ENCODE measurements at regions of chr3 and their contacts with region 1.

Region 1: DNA sequence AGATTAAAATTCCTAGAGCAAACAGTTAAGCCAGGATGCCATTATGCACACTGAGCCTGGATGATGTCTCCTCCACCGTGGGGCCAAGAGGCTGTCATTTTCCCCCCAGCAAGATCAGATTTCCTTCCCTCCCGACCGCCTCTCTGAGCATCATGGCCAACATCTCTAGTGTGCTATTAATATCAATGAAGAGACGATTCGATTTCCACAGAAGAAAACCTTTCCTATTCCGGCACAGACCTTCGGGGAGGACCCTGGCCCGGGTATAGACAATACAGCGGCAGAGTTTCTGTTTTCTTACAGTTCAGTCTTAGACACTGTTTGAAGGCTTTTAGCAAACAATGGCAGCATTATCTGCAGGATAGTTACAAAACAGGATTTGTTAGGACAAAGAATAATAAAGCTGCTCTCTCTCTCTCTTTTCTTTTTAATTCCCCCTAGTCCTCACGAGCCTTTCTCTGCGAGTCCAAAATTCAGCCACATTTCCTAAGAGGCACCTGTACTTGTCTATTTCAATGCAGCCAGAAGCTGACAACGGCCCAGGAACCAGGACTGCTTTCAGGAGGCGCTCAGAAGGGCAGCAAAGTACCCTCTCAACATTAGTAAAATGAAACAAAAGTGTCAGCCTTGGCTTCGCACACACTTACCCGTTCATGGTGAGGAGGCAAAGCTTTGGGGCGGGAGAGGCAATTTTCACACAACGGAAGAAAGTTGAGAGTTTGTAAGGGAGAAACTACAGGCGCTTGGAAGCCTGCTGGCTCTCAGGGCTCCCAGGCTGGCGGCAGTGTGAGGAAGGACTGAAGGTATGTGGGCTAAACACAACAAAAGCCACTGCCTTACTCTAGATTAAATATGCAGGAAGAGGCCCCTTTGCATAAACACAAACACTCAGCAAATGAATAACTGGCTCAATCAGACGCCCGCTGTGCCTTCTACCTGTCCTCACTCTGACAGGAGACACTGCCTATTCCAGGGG is 278.0 kb downstream of the FOXP1 start:
- DNase-seq: peak; percentile 36 to 41
- H3K4me3 ChIP-seq: peak overlapping the region; percentile 47
- H3K4me3 Mint-ChIP-seq: peak overlapping the region; percentile 93
- H3K27ac Mint-ChIP-seq: peak overlapping the region; percentile 91
- H3K4me1 ChIP-seq: peaks cover 26% of the 10 kb centered on the region
- H3K4me1 Mint-ChIP-seq: peaks cover 36% of the 10 kb centered on the region
- H3K27me3 ChIP-seq: no peaks in the 10 kb centered on the region
- H3K27me3 Mint-ChIP-seq: no peaks in the 10 kb centered on the region
- CTCF ChIP-seq: no peak

Region 2: GRCh38 chr3:70531063-70531657 is 774.4 kb before region 1 on chr3:
- CTCF ChIA-PET with region 1: no interaction called
- POLR2A ChIA-PET with region 1: no interaction called
- intact Hi-C with region 1: loop called (anchors 10 kb)
- DNase-seq: peak in 1 of 2 experiments; percentile 4
- H3K4me3 ChIP-seq: no peak overlapping the region
- H3K4me3 Mint-ChIP-seq: no peak overlapping the region
- H3K27ac Mint-ChIP-seq: no peak overlapping the region
- H3K4me1 ChIP-seq: no peaks in the 10 kb centered on the region
- H3K4me1 Mint-ChIP-seq: no peaks in the 10 kb centered on the region
- H3K27me3 ChIP-seq: no peaks in the 10 kb centered on the region
- H3K27me3 Mint-ChIP-seq: peaks cover 17% of the 10 kb centered on the region
- CTCF ChIP-seq: peak; percentile 38 to 46

Region 3: GRCh38 chr3:71006810-71007785 is 298.4 kb before region 1 on chr3:
- CTCF ChIA-PET with region 1: no interaction called
- POLR2A ChIA-PET with region 1: no interaction called
- intact Hi-C with region 1: loop called (anchors 1 kb)
- DNase-seq: peak in 1 of 2 experiments; percentile 13
- H3K4me3 ChIP-seq: no peak overlapping the region
- H3K4me3 Mint-ChIP-seq: no peak overlapping the region
- H3K27ac Mint-ChIP-seq: no peak overlapping the region
- H3K4me1 ChIP-seq: peaks cover 15% of the 10 kb centered on the region
- H3K4me1 Mint-ChIP-seq: peaks cover 6% of the 10 kb centered on the region
- H3K27me3 ChIP-seq: no peaks in the 10 kb centered on the region
- H3K27me3 Mint-ChIP-seq: no peaks in the 10 kb centered on the region
- CTCF ChIP-seq: peak in 1 of 2 experiments; percentile 40

Region 4: DNA sequence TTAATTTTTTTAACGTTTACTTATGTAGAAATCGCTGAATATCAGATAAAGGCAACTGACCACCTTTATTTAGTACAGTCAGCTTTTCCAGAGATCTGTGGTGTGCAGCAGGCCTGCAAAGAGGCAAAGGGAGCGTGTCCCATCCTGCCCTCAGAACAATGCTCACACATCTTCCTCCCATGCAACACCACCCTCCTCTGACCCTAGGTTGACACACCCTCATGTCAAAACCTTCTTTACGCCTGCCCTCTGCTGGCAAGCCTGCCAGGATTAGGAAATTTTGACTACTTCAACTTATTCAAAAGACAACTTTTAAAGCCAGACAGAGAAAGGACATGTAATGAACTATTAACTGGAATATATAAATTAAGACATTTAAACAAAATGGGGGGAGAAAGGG is 235.7 kb before region 1 on chr3:
- CTCF ChIA-PET with region 1: no interaction called
- POLR2A ChIA-PET with region 1: no interaction called
- intact Hi-C with region 1: loop called (anchors 5 kb)
- DNase-seq: peak; percentile 50 to 55
- H3K4me3 ChIP-seq: no peak overlapping the region
- H3K4me3 Mint-ChIP-seq: no peak overlapping the region
- H3K27ac Mint-ChIP-seq: peak overlapping the region; percentile 74
- H3K4me1 ChIP-seq: peaks cover 59% of the 10 kb centered on the region
- H3K4me1 Mint-ChIP-seq: peaks cover 46% of the 10 kb centered on the region
- H3K27me3 ChIP-seq: no peaks in the 10 kb centered on the region
- H3K27me3 Mint-ChIP-seq: no peaks in the 10 kb centered on the region
- CTCF ChIP-seq: peak; percentile 42 to 68

Region 5: DNA sequence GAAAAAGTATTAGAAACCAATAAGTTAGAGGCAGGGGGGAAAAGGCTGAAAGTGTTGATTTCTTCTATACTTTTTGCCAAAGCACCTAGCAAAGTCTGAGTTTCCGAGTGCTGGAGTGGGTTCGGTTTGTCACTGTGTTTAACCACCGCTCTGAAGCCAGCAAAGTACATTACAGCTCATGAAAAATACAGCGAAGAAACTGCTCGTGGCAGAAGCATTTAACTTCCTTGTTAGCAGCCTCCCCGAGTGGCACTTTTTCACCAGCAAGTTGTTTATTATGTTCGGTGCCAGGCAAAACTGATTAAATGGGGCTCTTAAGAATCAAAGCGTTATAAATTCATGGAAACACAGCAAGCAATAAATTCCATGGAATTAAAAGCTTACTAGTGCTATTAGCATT is 35.6 kb before region 1 on chr3:
- CTCF ChIA-PET with region 1: no interaction called
- POLR2A ChIA-PET with region 1: no interaction called
- intact Hi-C with region 1: no loop called
- DNase-seq: no peak
- H3K4me3 ChIP-seq: no peak overlapping the region
- H3K4me3 Mint-ChIP-seq: no peak overlapping the region
- H3K27ac Mint-ChIP-seq: no peak overlapping the region
- H3K4me1 ChIP-seq: peaks cover 7% of the 10 kb centered on the region
- H3K4me1 Mint-ChIP-seq: peaks cover 18% of the 10 kb centered on the region
- H3K27me3 ChIP-seq: no peaks in the 10 kb centered on the region
- H3K27me3 Mint-ChIP-seq: no peaks in the 10 kb centered on the region
- CTCF ChIP-seq: no peak

Region 6: GRCh38 chr3:71345429-71346040 is 40.0 kb after region 1 on chr3:
- CTCF ChIA-PET with region 1: no interaction called
- POLR2A ChIA-PET with region 1: no interaction called
- intact Hi-C with region 1: no loop called
- DNase-seq: no peak
- H3K4me3 ChIP-seq: no peak overlapping the region
- H3K4me3 Mint-ChIP-seq: no peak overlapping the region
- H3K27ac Mint-ChIP-seq: no peak overlapping the region
- H3K4me1 ChIP-seq: no peaks in the 10 kb centered on the region
- H3K4me1 Mint-ChIP-seq: no peaks in the 10 kb centered on the region
- H3K27me3 ChIP-seq: no peaks in the 10 kb centered on the region
- H3K27me3 Mint-ChIP-seq: no peaks in the 10 kb centered on the region
- CTCF ChIP-seq: no peak

Region 7: DNA sequence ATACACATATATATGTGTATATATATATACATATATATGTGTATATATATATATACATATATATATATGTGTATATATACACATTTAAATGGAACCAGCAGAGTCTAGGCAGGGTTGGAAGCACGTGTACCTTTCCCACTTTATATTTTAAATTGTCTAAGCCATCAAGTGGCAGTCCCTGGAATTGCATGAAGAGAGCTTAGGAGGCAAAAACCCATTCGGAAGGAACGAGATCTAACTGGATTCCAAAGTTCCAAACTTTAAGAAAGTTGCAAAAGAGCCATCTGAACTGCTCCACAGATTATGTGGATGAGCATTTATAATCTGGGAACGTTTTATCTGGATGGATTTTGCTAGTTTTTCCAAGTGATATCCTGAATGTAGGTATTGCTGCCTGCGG is 91.5 kb after region 1 on chr3:
- CTCF ChIA-PET with region 1: no interaction called
- POLR2A ChIA-PET with region 1: no interaction called
- intact Hi-C with region 1: loop called (anchors 5 kb)
- DNase-seq: peak in 1 of 2 experiments; percentile 45
- H3K4me3 ChIP-seq: no peak overlapping the region
- H3K4me3 Mint-ChIP-seq: no peak overlapping the region
- H3K27ac Mint-ChIP-seq: no peak overlapping the region
- H3K4me1 ChIP-seq: peaks cover 32% of the 10 kb centered on the region
- H3K4me1 Mint-ChIP-seq: peaks cover 22% of the 10 kb centered on the region
- H3K27me3 ChIP-seq: no peaks in the 10 kb centered on the region
- H3K27me3 Mint-ChIP-seq: no peaks in the 10 kb centered on the region
- CTCF ChIP-seq: peak; percentile 34 to 50